Sigmoid colon (tissue), 7 donors: ENCODE measurements at regions of chr1 and their contacts with region 1.

Region 1: GRCh38 chr1:171313835-171314320 is at the start of gene FMO4:
- DNase-seq: peak; percentile 96
- H3K4me3 ChIP-seq: peak within 1 kb of the TSS in 3 of 4 donors; percentile 15 to 37 (median 33)
- H3K27ac ChIP-seq: peak within 1 kb of the TSS; percentile 60 to 78 (median 68)
- H3K4me1 ChIP-seq: peaks cover 0 to 13% (median 8%) of the 10 kb centered on the region in 4 donors
- H3K27me3 ChIP-seq: no peaks in the 10 kb centered on the region
- CTCF ChIP-seq: peak; percentile 28 to 77 (median 62)
- EP300 ChIP-seq: peak in 2 of 4 donors; percentile 39 to 61
- POLR2A ChIP-seq: no peak
- total RNA-seq, gene FMO4: 2.0 to 4.4 (median 3.7) TPM

Region 2: GRCh38 chr1:170074250-170075157 is 1239.4 kb before region 1 on chr1 and contains the start of gene KIFAP3:
- intact Hi-C with region 1: loop called (anchors 10 kb)
- DNase-seq: peak; percentile 99
- H3K4me3 ChIP-seq: peak within 1 kb of the TSS; percentile 56 to 80 (median 70)
- H3K27ac ChIP-seq: peak within 1 kb of the TSS; percentile 81 to 88 (median 86)
- H3K4me1 ChIP-seq: peaks cover 0 to 25% (median 19%) of the 10 kb centered on the region in 4 donors
- H3K27me3 ChIP-seq: no peaks in the 10 kb centered on the region
- CTCF ChIP-seq: peak; percentile 23 to 55 (median 34)
- EP300 ChIP-seq: peak in 1 of 4 donors; percentile 42
- POLR2A ChIP-seq: peak; percentile 49 to 59
- total RNA-seq, gene KIFAP3: 28.1 to 36.7 (median 33.4) TPM

Region 3: DNA sequence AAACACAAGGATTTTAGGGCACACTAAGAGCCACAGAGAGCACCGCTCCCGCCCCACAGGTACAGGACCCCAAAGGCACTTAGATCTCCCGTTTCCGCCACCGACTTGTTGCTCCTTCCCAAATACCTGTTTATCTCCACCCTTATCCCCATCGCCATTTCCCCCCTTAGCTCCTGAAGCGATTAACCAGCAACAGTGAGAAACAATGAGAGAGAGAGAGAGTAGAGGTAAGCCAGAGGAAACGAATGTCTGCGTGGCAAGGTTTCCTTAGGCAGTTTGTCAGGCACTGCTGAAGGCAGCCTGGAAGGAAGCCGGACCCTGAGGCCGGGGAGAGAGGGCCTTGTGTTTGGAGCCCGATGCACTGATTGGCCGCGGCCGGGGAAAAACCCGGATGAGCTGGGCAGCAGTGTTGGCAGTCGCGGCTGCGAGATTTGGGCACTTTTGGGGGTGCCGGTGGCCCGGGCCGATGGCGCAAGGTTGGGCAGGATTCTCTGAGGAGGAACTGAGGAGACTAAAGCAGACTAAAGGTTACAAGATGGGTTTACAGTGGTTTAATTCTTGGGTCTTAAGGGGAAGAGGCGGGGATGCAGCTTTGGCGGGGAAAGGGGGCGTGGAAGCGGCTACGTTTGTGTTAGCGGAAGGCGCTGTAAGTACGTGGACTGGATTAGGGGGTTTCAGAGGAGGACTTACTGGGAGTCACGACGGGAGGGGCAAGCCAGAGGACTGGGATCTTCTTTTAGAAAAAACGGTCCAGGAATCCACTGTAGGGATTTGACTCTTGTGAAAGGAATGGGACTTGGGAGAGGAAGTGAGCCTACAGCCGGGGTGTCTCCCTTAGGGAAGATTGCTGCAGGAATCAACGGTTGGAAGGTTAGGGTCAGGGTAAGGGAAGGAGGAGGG is 781.9 kb before region 1 on chr1 and contains the start of gene GORAB:
- intact Hi-C with region 1: loop called (anchors 10 kb)
- DNase-seq: peak; percentile 95
- H3K4me3 ChIP-seq: peak within 1 kb of the TSS; percentile 55 to 63 (median 57)
- H3K27ac ChIP-seq: peak within 1 kb of the TSS; percentile 79 to 90 (median 82)
- H3K4me1 ChIP-seq: peaks cover 0 to 17% (median 12%) of the 10 kb centered on the region in 4 donors
- H3K27me3 ChIP-seq: no peaks in the 10 kb centered on the region
- CTCF ChIP-seq: no peak
- EP300 ChIP-seq: no peak
- POLR2A ChIP-seq: peak; percentile 49 to 62
- total RNA-seq, gene GORAB: 4.8 to 13.8 (median 7.1) TPM

Region 4: DNA sequence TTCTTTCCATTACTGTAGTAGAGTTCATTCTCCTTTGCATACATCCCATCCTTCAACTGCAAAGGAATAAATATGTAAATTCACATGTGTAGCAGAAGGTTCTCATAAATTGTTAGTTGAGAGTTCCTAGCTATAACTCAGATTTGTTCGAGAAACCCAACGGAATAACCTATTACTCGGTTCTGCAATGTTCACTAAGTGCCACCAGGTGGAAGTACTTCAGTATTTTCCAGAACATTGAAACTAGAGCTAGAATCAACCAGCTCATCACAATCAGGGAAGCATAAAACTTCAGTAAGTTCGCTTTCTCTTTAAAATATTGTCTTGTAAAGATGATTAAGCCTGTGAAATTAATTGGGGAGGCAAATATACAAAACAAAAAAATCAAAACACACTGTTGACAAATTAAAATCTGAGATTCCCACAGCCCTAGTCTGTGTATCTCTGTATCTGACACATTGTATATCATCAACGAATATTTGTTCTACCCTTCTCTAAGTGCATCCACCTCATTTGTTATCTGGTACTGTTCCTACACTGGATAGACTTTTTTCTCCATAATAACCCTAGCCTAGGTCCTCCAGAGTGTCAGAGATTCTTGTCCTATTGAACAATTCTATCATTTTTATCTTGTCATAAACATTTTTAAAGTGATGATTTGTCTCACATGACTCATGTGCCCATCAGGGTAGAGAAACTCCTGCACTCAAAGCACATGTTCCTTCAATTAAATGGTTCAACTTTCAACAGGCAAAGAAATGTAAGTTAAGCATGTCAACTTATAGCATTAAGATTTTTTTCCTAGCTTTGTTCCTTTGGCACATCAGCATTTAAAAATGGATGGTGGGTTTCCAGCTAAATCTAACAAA is 346.6 kb before region 1 on chr1:
- intact Hi-C with region 1: loop called (anchors 2 kb)
- DNase-seq: no peak
- H3K4me3 ChIP-seq: no peak overlapping the region
- H3K27ac ChIP-seq: no peak overlapping the region
- H3K4me1 ChIP-seq: peaks cover 0 to 5% (median 0%) of the 10 kb centered on the region in 4 donors
- H3K27me3 ChIP-seq: no peaks in the 10 kb centered on the region
- CTCF ChIP-seq: peak in 3 of 4 experiments; percentile 36 to 56 (median 50)
- EP300 ChIP-seq: no peak
- POLR2A ChIP-seq: no peak

Region 5: GRCh38 chr1:171245458-171246064 is 68.3 kb before region 1 on chr1:
- intact Hi-C with region 1: loop called (anchors 2 kb)
- DNase-seq: no peak
- H3K4me3 ChIP-seq: no peak overlapping the region
- H3K27ac ChIP-seq: no peak overlapping the region
- H3K4me1 ChIP-seq: no peaks in the 10 kb centered on the region
- H3K27me3 ChIP-seq: no peaks in the 10 kb centered on the region
- CTCF ChIP-seq: peak in 3 of 4 experiments; percentile 43 to 56 (median 50)
- EP300 ChIP-seq: no peak
- POLR2A ChIP-seq: no peak